ENCODE measurements at regions of chr19 and their contacts with region 1.

Region 1: GRCh38 chr19:35013031-35013819 is 13.1 kb downstream of the GRAMD1A start:
- DNase-seq: peak in 1 of 2 donors; percentile 57
- H3K4me3 ChIP-seq: no peak overlapping the region
- H3K27ac ChIP-seq: peak overlapping the region in 1 of 2 donors; percentile 53
- H3K4me1 ChIP-seq: peaks cover 0 to 6% of the 10 kb centered on the region in 2 donors
- H3K27me3 ChIP-seq: no peaks in the 10 kb centered on the region
- CTCF ChIP-seq: peak; percentile 94 to 95 (median 94)
- POLR2A ChIP-seq: no peak

Region 2: DNA sequence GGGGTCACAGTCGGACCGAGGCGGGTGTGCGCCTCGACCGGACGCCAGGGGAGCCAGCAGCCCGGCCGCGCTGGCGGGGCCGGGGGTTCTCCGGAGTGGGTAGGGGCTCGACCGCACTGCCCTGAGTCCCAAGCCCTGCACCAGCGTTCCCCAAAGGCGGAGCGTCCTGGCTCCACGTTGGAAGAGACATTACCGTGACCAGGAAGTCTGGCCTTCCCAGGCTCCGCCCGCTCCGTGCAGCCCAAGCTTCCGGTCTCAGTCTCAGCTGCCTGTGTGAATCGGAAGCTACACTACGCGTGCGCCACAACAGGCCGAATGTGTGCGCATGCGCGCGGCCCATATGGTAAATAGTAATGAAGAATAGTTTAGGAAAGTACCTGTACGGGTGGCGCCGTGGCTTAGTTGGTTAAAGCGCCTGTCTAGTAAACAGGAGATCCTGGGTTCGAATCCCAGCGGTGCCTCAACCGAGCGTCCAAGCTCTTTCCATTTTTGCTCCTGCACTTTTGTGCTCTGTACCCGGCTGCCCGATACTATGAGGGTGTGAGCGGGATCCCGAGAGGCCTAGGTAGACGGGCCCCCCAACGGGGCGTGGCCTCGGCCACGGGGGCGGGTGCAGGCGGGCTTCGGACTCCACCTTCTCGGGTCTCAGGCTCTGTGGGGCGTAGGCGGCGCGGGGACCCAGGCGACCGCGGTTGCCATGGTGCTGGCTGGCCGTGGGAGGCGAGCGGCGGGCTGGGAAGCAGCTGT is 1836.4 kb before region 1 on chr19:
- intact Hi-C with region 1: loop called (anchors 10 kb)
- DNase-seq: peak; percentile 95 to 98
- H3K4me3 ChIP-seq: peak overlapping the region; percentile 65 to 89 (median 85)
- H3K27ac ChIP-seq: peak overlapping the region; percentile 95
- H3K4me1 ChIP-seq: peaks cover 0 to 7% of the 10 kb centered on the region in 2 donors
- H3K27me3 ChIP-seq: no peaks in the 10 kb centered on the region
- CTCF ChIP-seq: peak in 2 of 3 donors; percentile 5 to 23
- POLR2A ChIP-seq: peak; percentile 69

Region 3: DNA sequence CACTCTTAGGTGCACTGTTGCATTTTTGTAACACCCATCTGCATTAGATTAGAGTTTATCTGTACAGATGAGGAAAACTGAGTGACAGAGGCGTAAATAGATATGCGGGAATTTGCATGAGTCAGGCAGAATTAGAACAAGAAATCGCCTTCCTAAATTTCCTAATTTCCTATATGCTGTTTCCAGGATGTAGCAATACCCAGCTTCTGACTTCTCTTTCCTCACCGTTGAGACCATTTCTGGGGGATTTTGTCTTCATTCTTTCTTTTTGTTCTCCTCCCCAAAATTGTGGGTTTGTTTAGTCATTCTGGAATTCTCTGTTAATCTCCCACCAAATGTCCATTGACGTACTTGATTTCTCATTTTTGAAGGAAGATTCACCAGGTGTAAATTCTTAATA is 38.6 kb before region 1 on chr19:
- intact Hi-C with region 1: loop called (anchors 5 kb)
- DNase-seq: no peak
- H3K4me3 ChIP-seq: no peak overlapping the region
- H3K27ac ChIP-seq: no peak overlapping the region
- H3K4me1 ChIP-seq: no peaks in the 10 kb centered on the region
- H3K27me3 ChIP-seq: no peaks in the 10 kb centered on the region
- CTCF ChIP-seq: no peak
- POLR2A ChIP-seq: no peak

Region 4: GRCh38 chr19:35030257-35031071 is 17.2 kb after region 1 on chr19 and contains the start of gene SCN1B:
- intact Hi-C with region 1: no loop called
- DNase-seq: no peak
- H3K4me3 ChIP-seq: peak within 1 kb of the TSS; percentile 59 to 87 (median 61)
- H3K27ac ChIP-seq: peak within 1 kb of the TSS in 1 of 2 donors; percentile 55
- H3K4me1 ChIP-seq: peaks cover 0 to 4% of the 10 kb centered on the region in 2 donors
- H3K27me3 ChIP-seq: no peaks in the 10 kb centered on the region
- CTCF ChIP-seq: peak in 1 of 3 donors; percentile 16
- POLR2A ChIP-seq: no peak
- total RNA-seq, gene SCN1B: 5.1 to 14.6 (median 8.5) TPM

Region 5: DNA sequence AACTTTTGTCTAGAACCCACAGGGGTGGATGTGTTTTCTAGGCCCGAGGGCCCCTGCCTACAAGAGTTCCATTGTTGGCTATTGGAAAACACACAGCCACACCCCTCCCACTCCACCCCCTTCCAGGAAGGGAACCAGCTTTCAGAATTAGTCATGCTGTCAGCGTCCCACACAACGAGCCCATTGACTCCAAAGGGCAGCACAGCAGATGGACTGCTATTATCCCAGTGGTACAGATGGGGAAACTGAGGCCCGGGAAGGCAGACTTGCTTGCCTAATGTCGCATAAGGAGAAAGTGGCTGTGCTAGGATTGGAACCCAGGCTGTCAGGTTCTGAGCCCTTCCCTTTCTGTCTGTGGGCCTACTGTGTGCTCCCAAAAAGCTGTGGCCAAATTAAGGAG is 94.3 kb after region 1 on chr19:
- intact Hi-C with region 1: no loop called
- DNase-seq: peak; percentile 78 to 92
- H3K4me3 ChIP-seq: no peak overlapping the region
- H3K27ac ChIP-seq: peak overlapping the region; percentile 84 to 90
- H3K4me1 ChIP-seq: peaks cover 2 to 18% of the 10 kb centered on the region in 2 donors
- H3K27me3 ChIP-seq: no peaks in the 10 kb centered on the region
- CTCF ChIP-seq: no peak
- POLR2A ChIP-seq: no peak